Caco-2 (cell line): ENCODE measurements at regions of chr10 and their contacts with region 1.

Region 1: GRCh38 chr10:60816628-60817397 is 38.5 kb downstream of the CDK1 start:
- DNase-seq: peak; percentile 63 to 79
- H3K4me3 ChIP-seq: no peak overlapping the region
- H3K4me3 Mint-ChIP-seq: no peak overlapping the region
- H3K27ac Mint-ChIP-seq: no peak overlapping the region
- H3K4me1 ChIP-seq: no peaks in the 10 kb centered on the region
- H3K4me1 Mint-ChIP-seq: no peaks in the 10 kb centered on the region
- H3K27me3 ChIP-seq: no peaks in the 10 kb centered on the region
- H3K27me3 Mint-ChIP-seq: peaks cover 13% of the 10 kb centered on the region
- CTCF ChIP-seq: peak; percentile 93 to 98

Region 2: DNA sequence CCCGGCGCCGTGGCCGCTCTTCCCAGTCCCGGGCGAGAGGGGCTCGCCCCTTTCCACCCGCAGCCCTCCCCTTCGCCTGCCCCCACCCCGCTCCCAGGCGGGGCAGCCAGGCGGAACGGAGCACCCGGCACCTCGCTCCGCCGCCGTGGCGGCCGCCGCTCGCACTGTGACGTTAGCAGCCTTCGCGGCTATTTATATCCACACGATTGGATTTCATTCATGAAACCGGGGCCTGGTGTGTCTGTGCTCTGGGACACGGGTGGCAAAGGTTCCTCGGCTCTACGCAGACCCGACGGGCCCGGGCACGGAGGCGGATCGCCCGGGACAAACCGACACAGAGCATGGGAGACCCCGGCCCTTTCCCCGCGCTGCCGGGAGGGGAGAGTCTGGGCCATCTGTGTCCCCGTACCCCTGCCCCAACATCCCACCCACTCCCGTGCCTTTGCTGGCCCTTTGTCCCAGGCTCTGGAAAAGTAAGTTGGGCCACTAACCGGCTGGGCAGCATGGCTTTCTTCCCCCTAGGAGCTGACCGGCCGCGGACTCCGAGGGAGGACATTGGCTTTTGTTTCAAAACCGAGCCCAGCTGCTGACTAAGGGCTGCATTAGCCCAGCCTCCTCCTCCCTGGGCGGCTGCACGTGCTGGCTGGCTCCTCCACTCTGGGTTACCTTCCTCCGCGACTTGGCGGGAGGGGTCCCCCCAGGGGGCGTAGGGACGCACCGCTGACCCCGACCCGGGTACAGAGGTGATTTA is 127.5 kb after region 1 on chr10 and contains the start of gene RHOBTB1:
- CTCF ChIA-PET with region 1: interaction called, 7 read pairs
- POLR2A ChIA-PET with region 1: no interaction called
- intact Hi-C with region 1: loop called (anchors 1 kb)
- DNase-seq: peak; percentile 64 to 76
- H3K4me3 ChIP-seq: peak within 1 kb of the TSS; percentile 67
- H3K4me3 Mint-ChIP-seq: peak within 1 kb of the TSS; percentile 82
- H3K27ac Mint-ChIP-seq: peak within 1 kb of the TSS; percentile 80
- H3K4me1 ChIP-seq: peaks cover 6% of the 10 kb centered on the region
- H3K4me1 Mint-ChIP-seq: no peaks in the 10 kb centered on the region
- H3K27me3 ChIP-seq: peaks cover 1% of the 10 kb centered on the region; the same call in 1 of the 2 replicates
- H3K27me3 Mint-ChIP-seq: peaks cover 28% of the 10 kb centered on the region
- CTCF ChIP-seq: no peak
- total RNA-seq, gene RHOBTB1: 18.3 and 19.9 TPM in 2 replicates

Region 3: GRCh38 chr10:61140765-61141392 is 324.1 kb after region 1 on chr10:
- CTCF ChIA-PET with region 1: no interaction called
- POLR2A ChIA-PET with region 1: no interaction called
- intact Hi-C with region 1: loop called (anchors 5 kb)
- DNase-seq: peak in 1 of 2 experiments; percentile 64
- H3K4me3 ChIP-seq: no peak overlapping the region
- H3K4me3 Mint-ChIP-seq: no peak overlapping the region
- H3K27ac Mint-ChIP-seq: no peak overlapping the region
- H3K4me1 ChIP-seq: no peaks in the 10 kb centered on the region
- H3K4me1 Mint-ChIP-seq: no peaks in the 10 kb centered on the region
- H3K27me3 ChIP-seq: no peaks in the 10 kb centered on the region
- H3K27me3 Mint-ChIP-seq: peaks cover 15% of the 10 kb centered on the region
- CTCF ChIP-seq: peak; percentile 80 to 92

Region 4: GRCh38 chr10:61284222-61284890 is 467.5 kb after region 1 on chr10:
- CTCF ChIA-PET with region 1: interaction called, 7 read pairs
- POLR2A ChIA-PET with region 1: no interaction called
- intact Hi-C with region 1: loop called (anchors 1 kb)
- DNase-seq: peak in 1 of 2 experiments; percentile 73
- H3K4me3 ChIP-seq: no peak overlapping the region
- H3K4me3 Mint-ChIP-seq: no peak overlapping the region
- H3K27ac Mint-ChIP-seq: no peak overlapping the region
- H3K4me1 ChIP-seq: peaks cover 5% of the 10 kb centered on the region; the same call in 1 of the 2 replicates
- H3K4me1 Mint-ChIP-seq: peaks cover 8% of the 10 kb centered on the region
- H3K27me3 ChIP-seq: no peaks in the 10 kb centered on the region
- H3K27me3 Mint-ChIP-seq: peaks cover 2% of the 10 kb centered on the region
- CTCF ChIP-seq: peak; percentile 84

Region 5: DNA sequence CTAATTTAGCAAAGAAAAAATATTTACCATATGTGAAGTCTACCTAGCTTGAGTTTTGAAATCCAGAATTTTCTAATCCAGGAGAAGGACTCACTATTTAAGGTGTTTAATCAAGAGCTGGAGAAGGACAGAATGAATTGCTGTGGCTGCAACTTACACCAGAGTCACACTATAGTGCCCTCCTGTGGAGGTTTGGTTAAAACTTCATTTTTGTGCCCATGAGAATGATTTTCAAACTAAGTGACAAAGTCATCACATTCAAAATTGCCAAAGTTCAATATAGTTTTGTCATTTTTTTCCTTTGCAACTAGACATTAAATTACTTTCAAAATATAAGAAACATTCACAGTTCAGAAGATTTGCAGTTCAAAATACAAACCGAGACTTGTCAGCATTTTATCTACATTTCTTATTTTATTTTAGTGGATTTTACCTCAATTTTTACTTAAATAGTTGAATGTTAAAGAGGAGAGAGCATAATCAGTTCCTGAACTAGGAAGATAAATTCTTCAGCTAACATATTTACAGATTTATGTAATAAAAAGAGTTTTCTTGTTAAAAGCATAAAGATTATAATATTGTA is 916.6 kb after region 1 on chr10:
- CTCF ChIA-PET with region 1: no interaction called
- POLR2A ChIA-PET with region 1: no interaction called
- intact Hi-C with region 1: loop called (anchors 2 kb)
- DNase-seq: peak in 1 of 2 experiments; percentile 71
- H3K4me3 ChIP-seq: no peak overlapping the region
- H3K4me3 Mint-ChIP-seq: no peak overlapping the region
- H3K27ac Mint-ChIP-seq: no peak overlapping the region
- H3K4me1 ChIP-seq: no peaks in the 10 kb centered on the region
- H3K4me1 Mint-ChIP-seq: peaks cover 7% of the 10 kb centered on the region
- H3K27me3 ChIP-seq: no peaks in the 10 kb centered on the region
- H3K27me3 Mint-ChIP-seq: peaks cover 10% of the 10 kb centered on the region
- CTCF ChIP-seq: peak; percentile 80 to 87